ENCODE measurements at regions of chr18 and their contacts with region 1.

Region 1: DNA sequence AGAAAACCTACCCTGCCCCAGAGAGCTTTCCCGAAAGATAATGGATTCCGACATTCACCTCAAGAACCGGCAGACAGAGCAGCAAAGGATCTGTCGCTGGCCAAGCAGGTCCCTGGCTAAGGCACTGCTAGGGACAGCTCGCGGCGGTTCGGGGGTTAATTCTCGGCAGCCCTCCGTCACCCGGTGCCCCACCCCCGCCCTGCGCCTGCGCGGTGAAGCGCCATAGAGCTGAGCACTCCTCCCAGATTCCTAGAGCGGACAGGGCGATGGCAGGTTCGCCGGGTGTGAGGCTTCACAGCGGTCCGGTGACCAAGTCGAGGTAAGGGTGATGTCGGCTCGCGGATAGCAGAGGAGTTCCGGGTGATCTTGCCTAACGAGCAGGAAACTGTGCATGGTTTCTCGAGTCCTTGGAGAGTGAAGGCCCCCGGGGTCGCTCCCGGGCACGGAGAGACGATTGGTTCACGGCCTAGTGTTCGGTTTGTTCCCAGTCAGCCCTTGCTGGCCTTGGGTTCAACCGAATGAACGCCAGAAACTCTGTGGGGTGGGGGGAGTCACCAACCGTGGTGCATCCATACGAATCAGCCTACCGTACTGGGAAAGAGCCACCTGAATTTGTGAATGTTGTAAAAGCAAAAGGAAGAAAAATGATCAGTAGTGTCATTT is at the start of gene ZSCAN30:
- DNase-seq: peak; percentile 95
- ATAC-seq: peak; percentile 99
- total RNA-seq, gene ZSCAN30: 13.3 to 19.1 TPM

Region 2: GRCh38 chr18:35220432-35220831 is 69.8 kb before region 1 on chr18:
- intact Hi-C with region 1: no loop called
- DNase-seq: no peak
- ATAC-seq: no peak

Region 3: GRCh38 chr18:35240664-35241447 is 49.3 kb before region 1 on chr18 and contains the start of gene ZNF397:
- intact Hi-C with region 1: loop called in 1 of 2 experiments (anchors 5 kb)
- DNase-seq: peak; percentile 99
- ATAC-seq: peak; percentile 100
- total RNA-seq, gene ZNF397: 16.1 to 17.9 TPM

Region 4: DNA sequence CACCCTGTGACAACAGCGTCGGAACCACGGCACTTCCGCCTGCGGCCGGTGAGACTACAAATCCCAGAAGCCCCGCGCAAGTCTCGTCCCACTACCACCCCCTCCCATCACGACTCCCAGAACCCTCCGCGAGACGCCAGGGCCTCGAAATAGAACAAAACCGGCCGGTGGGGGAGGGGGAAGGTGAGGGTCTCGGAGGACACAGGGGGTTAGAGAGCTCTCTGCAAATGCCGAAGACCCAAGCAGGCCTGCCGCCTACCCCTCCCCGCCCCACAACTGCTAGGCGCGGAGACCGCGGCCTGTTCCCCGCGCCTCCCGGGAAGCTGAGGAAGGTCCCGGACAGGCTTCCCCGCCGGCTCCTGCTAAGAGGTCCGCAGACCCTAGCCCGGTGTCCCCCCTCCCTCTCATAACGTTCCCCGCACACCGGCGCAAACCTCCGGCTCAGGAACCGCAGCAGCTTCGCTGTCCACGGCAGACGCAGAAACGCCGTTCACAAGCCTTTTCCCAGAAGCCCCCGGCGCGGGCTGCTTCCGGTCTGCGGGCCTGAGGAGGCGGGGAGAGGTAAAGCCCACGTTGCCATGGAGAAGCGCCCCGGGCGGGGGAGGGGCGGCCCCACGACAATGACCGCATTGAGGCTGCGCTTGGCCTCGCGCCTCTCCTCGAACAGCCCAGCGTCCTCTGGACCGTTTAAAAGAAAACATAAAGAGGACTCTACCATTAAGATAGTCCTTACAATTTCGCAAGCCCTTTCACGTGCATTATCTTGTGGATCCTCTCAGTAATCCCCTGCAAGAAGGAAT is 53.9 kb after region 1 on chr18 and contains the start of gene ZNF24:
- intact Hi-C with region 1: loop called in 1 of 2 experiments (anchors 5 kb)
- DNase-seq: peak; percentile 96
- ATAC-seq: peak; percentile 98 to 99
- total RNA-seq, gene ZNF24: 43.5 to 51.1 TPM